ENCODE measurements at regions of chr17 and their contacts with region 1.

Region 1: GRCh38 chr17:3738562-3739295 is 15.0 kb downstream of the HASPIN start:
- DNase-seq: peak; percentile 33 to 77 (median 52)
- ATAC-seq: peak; percentile 84 to 90
- H3K4me3 Mint-ChIP-seq: peak overlapping the region; percentile 12 to 83 (median 54)
- H3K27ac Mint-ChIP-seq: peak overlapping the region; percentile 25 to 91 (median 84)
- H3K4me1 Mint-ChIP-seq: peaks cover 19 to 54% (median 45%) of the 10 kb centered on the region in 4 donors
- H3K27me3 Mint-ChIP-seq: no peaks in the 10 kb centered on the region

Region 2: GRCh38 chr17:3704931-3705717 is 33.6 kb before region 1 on chr17:
- POLR2A ChIA-PET with region 1: no interaction called
- DNase-seq: no peak
- ATAC-seq: no peak
- H3K4me3 Mint-ChIP-seq: no peak overlapping the region
- H3K27ac Mint-ChIP-seq: peak overlapping the region in 1 of 10 donors; percentile 29
- H3K4me1 Mint-ChIP-seq: peaks cover 0 to 28% (median 4%) of the 10 kb centered on the region in 4 donors
- H3K27me3 Mint-ChIP-seq: no peaks in the 10 kb centered on the region

Region 3: DNA sequence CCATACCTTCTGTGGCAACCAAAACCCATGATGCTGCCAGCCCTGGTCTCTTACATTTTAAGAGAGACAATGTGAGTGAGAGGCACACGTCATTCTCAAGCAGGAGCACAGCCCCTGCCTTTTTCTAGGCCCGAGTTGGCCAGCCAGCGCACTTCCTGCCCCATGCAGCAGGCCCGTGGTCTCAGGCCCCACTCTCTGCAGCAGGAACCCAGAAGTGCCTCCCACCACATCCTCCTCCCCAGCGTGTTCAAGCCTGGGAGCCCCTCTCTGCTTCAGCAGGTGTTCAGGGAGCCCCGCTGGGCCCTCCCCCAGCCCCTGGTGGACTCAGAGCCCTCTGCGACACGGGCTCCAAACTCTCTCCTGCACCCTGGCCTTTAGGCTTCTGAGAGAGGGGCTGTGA is 31.7 kb after region 1 on chr17:
- POLR2A ChIA-PET with region 1: interaction called, 10 read pairs
- DNase-seq: peak in 9 of 10 donors; percentile 51 to 83 (median 74)
- ATAC-seq: peak; percentile 68 to 83
- H3K4me3 Mint-ChIP-seq: peak overlapping the region; percentile 38 to 85 (median 58)
- H3K27ac Mint-ChIP-seq: peak overlapping the region; percentile 82 to 98 (median 94)
- H3K4me1 Mint-ChIP-seq: peaks cover 39 to 75% (median 69%) of the 10 kb centered on the region in 4 donors
- H3K27me3 Mint-ChIP-seq: no peaks in the 10 kb centered on the region

Region 4: GRCh38 chr17:3827124-3827773 is 88.5 kb after region 1 on chr17:
- POLR2A ChIA-PET with region 1: interaction called, 23 read pairs
- DNase-seq: peak; percentile 54 to 88 (median 72)
- ATAC-seq: peak in 1 of 2 donors; percentile 65
- H3K4me3 Mint-ChIP-seq: no peak overlapping the region
- H3K27ac Mint-ChIP-seq: peak overlapping the region in 2 of 10 donors; percentile 24 to 63
- H3K4me1 Mint-ChIP-seq: peaks cover 0 to 11% (median 2%) of the 10 kb centered on the region in 4 donors
- H3K27me3 Mint-ChIP-seq: no peaks in the 10 kb centered on the region

Region 5: DNA sequence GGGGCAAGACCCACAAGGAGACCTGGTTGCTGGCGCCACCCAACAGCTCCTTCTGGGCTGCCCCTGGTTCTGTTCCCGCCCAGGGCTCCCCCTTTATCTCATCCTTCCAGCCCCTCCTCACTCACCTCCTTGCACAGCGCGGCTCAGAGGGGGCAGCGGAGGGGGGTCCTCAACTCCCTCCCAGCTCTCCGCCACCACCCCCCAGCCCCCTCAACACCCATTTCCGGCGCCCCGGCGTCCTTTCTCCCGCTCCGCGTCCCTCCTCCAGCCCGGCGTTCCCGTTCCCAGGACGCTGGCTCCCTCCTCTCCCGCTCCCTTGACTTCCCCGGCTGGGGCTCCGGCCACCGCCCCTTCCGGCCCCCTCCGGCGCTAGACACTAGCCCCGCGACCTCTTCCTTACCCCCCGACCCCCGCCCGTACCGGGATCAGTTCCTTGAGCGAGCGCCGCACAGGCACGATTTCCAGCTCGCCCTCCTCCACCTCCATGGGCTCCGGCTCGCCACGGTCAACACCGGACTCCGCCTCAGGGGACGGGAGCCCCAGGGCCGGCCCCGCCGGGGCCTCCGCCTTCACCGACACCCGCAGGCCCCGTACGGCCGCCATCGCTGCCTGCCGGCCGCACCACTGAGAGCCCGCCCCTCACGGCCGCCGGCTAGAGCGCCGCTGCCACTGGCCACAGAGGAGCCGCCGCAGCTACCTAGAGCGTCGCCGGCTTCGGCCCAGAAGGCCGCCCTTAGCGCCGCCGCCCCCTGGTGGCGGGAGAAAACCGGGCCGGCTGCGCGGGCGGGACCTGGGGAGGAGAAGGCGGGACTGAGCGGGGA is 107.1 kb after region 1 on chr17 and contains the start of gene NCBP3:
- POLR2A ChIA-PET with region 1: interaction called, 16 read pairs
- DNase-seq: peak; percentile 82 to 94 (median 90)
- ATAC-seq: peak; percentile 97
- H3K4me3 Mint-ChIP-seq: peak within 1 kb of the TSS; percentile 85 to 97 (median 90)
- H3K27ac Mint-ChIP-seq: peak within 1 kb of the TSS; percentile 82 to 96 (median 91)
- H3K4me1 Mint-ChIP-seq: peaks cover 10 to 40% (median 30%) of the 10 kb centered on the region in 4 donors
- H3K27me3 Mint-ChIP-seq: peaks cover 0 to 1% (median 0%) of the 10 kb centered on the region in 5 donors
- polyA plus RNA-seq, gene NCBP3: 9.3 to 15.5 (median 9.3) TPM